ENCODE measurements at regions of chr13 and their contacts with region 1.

Region 1: DNA sequence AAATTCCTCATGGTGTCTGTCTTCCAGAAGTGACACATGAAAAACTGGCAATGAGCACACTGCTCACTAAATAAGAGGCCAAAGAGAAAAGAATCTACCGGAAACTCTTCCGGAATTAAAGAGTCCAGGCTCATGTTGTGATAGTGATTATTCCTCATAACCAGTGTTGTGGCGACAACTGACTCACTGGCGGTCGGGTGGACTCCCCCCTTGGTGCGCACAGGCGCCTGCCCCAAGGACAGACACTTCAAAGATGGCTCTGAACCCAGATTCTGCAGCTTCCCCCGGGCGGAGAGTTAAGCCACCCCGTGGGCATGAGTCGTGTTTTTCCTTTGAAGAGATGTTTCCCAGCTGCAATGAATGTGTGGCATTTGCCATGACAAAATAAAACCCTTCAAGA is 10.3 kb downstream of the IL17D start:
- DNase-seq: peak; percentile 38
- H3K4me3 ChIP-seq: no peak overlapping the region
- H3K27ac ChIP-seq: peak overlapping the region; percentile 56
- H3K4me1 ChIP-seq: peaks cover 38% of the 10 kb centered on the region
- H3K27me3 ChIP-seq: no peaks in the 10 kb centered on the region
- CTCF ChIP-seq: no peak
- POLR2A ChIP-seq: no peak

Region 2: DNA sequence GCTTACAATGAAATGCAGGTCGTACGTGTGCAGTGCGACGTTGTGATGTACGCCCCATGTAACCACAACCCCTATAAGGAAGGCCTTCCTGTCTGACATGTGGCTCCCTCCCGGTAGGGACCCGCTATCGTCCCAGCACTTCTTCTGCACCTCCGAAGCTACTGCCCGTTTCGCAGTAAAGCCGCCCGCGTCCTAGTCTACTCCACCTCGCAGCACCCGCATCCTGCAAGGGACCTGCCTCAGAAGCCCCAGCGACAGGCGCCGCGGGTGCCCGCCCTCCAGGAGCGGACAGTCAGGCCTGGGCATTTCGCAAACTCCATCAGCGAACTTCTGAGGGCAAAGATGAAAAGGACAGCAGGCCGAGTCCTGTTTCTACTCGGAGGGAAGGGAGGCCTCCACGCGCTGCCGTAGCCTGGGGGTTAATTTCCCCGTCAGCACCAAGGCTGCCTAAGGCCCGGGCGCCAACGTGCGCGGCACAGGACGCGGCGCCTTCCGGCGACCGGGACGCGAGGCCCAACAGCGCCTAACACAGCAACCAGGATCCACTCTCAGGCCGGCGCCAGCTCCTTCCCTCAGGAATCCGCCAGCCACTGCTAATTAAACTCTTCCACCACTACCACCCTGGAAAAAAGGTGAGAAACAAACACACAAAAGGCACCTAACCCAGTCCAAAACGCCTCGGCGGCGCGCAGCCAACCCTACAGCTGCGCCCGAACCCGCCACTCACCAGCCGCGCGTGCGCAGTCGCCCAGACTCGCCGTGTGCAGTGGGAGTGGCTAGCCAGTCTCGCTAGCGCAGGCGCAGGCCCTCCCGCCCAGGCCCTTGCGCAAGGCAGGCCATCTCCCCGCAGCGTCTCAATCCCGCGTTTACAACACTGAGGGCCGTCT is 59.7 kb after region 1 on chr13 and contains the start of gene EEF1AKMT1:
- CTCF ChIA-PET with region 1: interaction called, 3 read pairs
- POLR2A ChIA-PET with region 1: no interaction called
- dilution Hi-C with region 1: no loop called
- intact Hi-C with region 1: loop called (anchors 2 kb)
- DNase-seq: peak; percentile 91
- H3K4me3 ChIP-seq: peak within 1 kb of the TSS; percentile 13 to 60 (median 35)
- H3K27ac ChIP-seq: peak within 1 kb of the TSS; percentile 88
- H3K4me1 ChIP-seq: peaks cover 18% of the 10 kb centered on the region
- H3K27me3 ChIP-seq: no peaks in the 10 kb centered on the region
- CTCF ChIP-seq: no peak
- POLR2A ChIP-seq: peak; percentile 56
- total RNA-seq, gene EEF1AKMT1: 8.7 and 11.1 TPM in 2 replicates

Region 3: GRCh38 chr13:20787180-20787579 is 73.4 kb after region 1 on chr13:
- CTCF ChIA-PET with region 1: interaction called, 5 read pairs
- POLR2A ChIA-PET with region 1: no interaction called
- dilution Hi-C with region 1: no loop called
- intact Hi-C with region 1: loop called (anchors 2 kb)
- DNase-seq: no peak
- H3K4me3 ChIP-seq: no peak overlapping the region
- H3K27ac ChIP-seq: no peak overlapping the region
- H3K4me1 ChIP-seq: peaks cover 43% of the 10 kb centered on the region
- H3K27me3 ChIP-seq: no peaks in the 10 kb centered on the region
- CTCF ChIP-seq: no peak
- POLR2A ChIP-seq: no peak

Region 4: DNA sequence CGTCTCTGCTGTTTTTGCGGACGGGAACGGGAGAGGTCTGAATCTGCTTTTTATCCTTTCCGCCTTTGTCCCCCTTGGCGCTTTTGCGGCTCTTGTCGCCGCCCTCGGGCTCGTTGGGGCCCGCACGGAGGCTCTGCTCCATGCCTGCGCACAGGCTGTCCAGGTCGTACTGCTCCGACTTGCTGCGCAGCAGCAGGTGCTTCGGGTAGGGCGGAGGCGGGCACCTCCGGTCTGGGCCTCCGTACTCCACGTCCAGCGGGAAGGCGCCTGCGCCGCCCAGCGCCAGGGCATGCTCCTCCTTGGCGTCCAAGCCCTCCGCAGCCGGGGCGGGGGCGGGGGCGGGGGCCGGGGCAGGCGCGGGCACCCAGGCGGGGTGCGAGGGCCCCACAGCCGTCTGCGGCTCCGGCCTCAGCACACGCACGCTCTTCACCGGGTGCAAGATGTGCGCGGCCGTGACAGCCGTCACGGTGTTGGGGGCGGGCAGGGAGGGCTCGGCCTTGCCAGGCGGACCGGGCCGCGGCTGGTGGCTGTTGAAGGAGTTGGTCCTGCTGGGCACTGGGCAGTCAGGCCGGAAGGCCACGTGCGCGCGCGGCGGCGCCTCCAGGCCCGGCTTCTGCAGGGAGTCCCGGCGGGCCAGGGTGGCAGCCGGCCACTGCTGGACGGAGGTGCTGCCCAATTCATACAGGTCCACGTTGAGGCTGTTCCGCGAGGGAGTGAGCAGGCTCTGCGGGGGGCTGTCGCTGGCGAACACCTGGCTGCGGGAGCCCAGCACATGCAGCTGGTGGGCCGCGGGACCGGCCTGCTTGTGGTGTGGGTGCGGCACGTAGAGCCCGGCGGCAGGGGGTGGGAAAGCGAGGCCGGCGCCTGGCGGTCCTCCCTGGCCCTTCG is 274.5 kb after region 1 on chr13:
- CTCF ChIA-PET with region 1: no interaction called
- POLR2A ChIA-PET with region 1: no interaction called
- dilution Hi-C with region 1: no loop called
- intact Hi-C with region 1: no loop called
- DNase-seq: no peak
- H3K4me3 ChIP-seq: no peak overlapping the region
- H3K27ac ChIP-seq: no peak overlapping the region
- H3K4me1 ChIP-seq: no peaks in the 10 kb centered on the region
- H3K27me3 ChIP-seq: no peaks in the 10 kb centered on the region
- CTCF ChIP-seq: no peak
- POLR2A ChIP-seq: no peak